ENCODE measurements at regions of chr3 and their contacts with region 1.

Region 1: GRCh38 chr3:49093853-49094767 is at the start of gene QRICH1:
- DNase-seq: peak; percentile 97 to 98
- H3K4me3 ChIP-seq: peak within 1 kb of the TSS; percentile 23 to 97 (median 91)
- H3K27ac ChIP-seq: peak within 1 kb of the TSS; percentile 94 to 97 (median 97)
- H3K4me1 ChIP-seq: peaks cover 17 to 35% of the 10 kb centered on the region in 2 donors
- H3K27me3 ChIP-seq: no peaks in the 10 kb centered on the region
- CTCF ChIP-seq: peak in 5 of 6 experiments; percentile 29 to 53 (median 43)
- POLR2A ChIP-seq: peak in 1 of 2 donors; percentile 76
- total RNA-seq, gene QRICH1: 79.8 to 342 (median 98.3) TPM

Region 2: DNA sequence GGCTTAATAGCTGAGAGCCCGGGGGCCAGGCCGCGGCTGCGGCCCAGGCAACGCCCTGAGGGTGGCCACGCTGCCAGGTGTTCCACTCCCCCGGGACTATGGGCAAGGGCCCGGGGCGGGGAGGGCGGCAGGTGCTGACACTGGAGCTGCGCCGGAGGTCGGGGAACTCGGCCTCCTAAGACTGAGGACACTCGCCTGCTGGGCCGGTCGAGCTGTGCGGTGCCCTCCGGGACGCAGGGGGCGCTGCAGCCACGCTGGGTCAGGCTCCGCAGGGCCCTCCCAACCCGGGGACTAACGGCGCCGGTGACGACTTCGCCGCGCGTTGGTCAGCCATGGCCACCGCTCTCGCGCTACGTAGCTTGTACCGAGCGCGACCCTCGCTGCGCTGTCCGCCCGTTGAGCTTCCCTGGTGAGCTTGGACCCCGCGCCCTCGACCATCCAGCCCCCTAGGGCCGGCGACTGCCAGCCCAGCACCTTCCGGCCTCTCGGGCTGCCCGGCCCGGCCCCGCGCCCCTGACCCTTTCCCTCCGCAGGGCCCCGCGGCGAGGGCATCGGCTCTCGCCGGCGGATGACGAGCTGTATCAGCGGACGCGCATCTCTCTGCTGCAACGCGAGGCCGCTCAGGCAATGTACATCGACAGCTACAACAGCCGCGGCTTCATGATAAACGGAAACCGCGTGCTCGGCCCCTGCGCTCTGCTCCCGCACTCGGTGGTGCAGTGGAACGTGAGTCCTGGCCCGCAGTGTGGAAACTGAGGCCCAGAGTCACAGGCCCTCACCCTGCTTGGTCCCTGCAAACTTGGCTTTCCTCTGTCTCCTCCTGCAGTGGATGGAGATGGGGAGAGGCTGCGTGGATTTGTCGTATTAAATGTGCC is 72.1 kb before region 1 on chr3 and contains the start of gene NDUFAF3:
- intact Hi-C with region 1: loop called (anchors 10 kb)
- DNase-seq: peak; percentile 93
- H3K4me3 ChIP-seq: peak within 1 kb of the TSS; percentile 77 to 98 (median 97)
- H3K27ac ChIP-seq: peak within 1 kb of the TSS; percentile 94 to 100 (median 100)
- H3K4me1 ChIP-seq: peaks cover 30 to 37% of the 10 kb centered on the region in 2 donors
- H3K27me3 ChIP-seq: no peaks in the 10 kb centered on the region
- CTCF ChIP-seq: peak; percentile 81 to 99 (median 96)
- POLR2A ChIP-seq: peak; percentile 53 to 62
- total RNA-seq, gene NDUFAF3: 120 to 305 (median 146) TPM

Measured in thyroid gland (tissue), 4 donors.